ENCODE measurements at regions of chr6 and their contacts with region 1.

Region 1: DNA sequence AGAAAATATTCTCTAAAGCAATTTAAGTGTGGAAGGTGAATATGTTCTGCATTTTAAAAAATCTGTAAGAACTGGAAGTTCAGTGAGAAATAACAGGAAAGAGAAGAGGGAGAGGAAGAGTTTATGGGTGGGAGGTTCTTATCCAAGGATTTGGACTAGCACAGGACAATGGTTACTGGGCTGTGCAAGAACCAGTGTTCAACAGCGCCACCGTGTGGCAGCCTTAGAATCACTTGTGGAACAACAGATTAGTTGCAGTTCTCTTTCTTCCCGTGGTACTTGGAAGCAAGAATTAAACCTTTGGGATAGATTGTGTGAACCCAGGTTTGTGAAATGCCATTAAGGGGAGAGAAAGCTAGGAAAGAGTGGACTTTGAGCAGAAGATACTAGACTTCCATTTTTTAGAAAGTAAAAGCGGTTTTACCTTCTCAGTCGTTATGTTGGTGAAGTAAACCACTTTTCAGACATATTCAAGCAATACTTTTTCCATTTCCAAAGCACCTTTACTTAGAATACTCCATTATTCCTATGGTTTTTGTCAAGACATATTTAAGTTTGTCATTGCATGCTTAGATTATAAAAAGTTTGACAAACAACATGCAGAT is 436.7 kb downstream of the RNF144B start:
- DNase-seq: peak; percentile 57
- H3K4me3 Mint-ChIP-seq: no peak overlapping the region
- H3K27ac Mint-ChIP-seq: no peak overlapping the region
- H3K4me1 Mint-ChIP-seq: no peaks in the 10 kb centered on the region
- H3K27me3 Mint-ChIP-seq: no peaks in the 10 kb centered on the region

Region 2: GRCh38 chr6:18595774-18596530 is 227.9 kb before region 1 on chr6:
- CTCF ChIA-PET with region 1: no interaction called
- POLR2A ChIA-PET with region 1: no interaction called
- intact Hi-C with region 1: loop called (anchors 5 kb)
- DNase-seq: peak; percentile 40
- H3K4me3 Mint-ChIP-seq: no peak overlapping the region
- H3K27ac Mint-ChIP-seq: no peak overlapping the region
- H3K4me1 Mint-ChIP-seq: no peaks in the 10 kb centered on the region
- H3K27me3 Mint-ChIP-seq: peaks cover 1% of the 10 kb centered on the region

Measured in activated CD4-positive, alpha-beta memory T cell treated with anti-CD3 and anti-CD28 coated beads for 36 hours (primary cell).